Right ventricle myocardium inferior (tissue), 1 donor: ENCODE measurements at regions of chr4 and their contacts with region 1.

Region 1: GRCh38 chr4:152850377-152850776 is 70.6 kb downstream of the ARFIP1 start:
- DNase-seq: no peak
- ATAC-seq: peak; percentile 62

Region 2: DNA sequence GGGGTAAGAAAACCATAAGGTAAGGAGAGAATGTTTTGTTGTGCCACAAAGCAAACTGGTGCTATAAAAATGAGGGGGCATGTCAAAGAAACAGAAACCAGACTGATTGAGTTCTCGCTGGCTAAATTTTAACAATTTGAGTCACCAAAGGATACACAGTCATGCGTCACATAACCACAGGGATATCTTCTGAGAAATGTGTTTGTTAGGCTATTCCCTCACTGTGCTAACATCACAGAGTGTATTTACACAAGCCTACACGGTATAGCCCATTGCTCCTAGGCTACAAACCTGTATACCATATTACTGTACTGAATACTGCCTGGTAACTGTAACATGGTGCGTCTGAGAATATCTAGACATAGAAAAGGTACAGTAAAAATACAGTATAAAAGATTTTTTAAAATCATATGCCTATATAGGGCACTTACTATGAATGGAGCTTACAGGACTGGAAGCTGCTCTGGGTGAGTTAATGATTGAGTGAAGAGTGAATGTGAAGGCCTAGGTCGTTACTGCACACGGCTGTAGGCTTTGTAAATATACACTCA is 364.6 kb before region 1 on chr4:
- intact Hi-C with region 1: no loop called
- DNase-seq: no peak
- ATAC-seq: no peak

Region 3: DNA sequence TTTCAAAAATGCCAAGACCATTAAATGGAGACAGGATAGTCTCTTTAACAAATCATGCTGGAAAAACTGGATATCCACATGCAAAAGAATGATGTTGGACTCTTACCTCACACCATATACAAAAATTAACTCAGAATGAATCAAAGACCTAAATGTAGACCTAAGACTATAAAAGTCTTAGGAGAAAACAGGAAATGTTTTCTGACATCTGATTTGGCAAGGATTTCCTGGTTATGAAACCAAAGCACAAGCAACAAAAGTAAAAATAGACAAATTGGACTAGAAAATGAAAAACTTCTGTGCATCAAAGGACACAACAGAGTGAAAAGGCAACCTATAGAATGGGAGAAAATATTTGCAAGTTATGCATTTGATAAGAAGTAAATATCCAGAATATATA is 33.0 kb before region 1 on chr4:
- intact Hi-C with region 1: no loop called
- DNase-seq: no peak
- ATAC-seq: no peak

Region 4: GRCh38 chr4:152956650-152957436 is 106.5 kb after region 1 on chr4:
- intact Hi-C with region 1: loop called (anchors 5 kb)
- DNase-seq: no peak
- ATAC-seq: no peak

Region 5: DNA sequence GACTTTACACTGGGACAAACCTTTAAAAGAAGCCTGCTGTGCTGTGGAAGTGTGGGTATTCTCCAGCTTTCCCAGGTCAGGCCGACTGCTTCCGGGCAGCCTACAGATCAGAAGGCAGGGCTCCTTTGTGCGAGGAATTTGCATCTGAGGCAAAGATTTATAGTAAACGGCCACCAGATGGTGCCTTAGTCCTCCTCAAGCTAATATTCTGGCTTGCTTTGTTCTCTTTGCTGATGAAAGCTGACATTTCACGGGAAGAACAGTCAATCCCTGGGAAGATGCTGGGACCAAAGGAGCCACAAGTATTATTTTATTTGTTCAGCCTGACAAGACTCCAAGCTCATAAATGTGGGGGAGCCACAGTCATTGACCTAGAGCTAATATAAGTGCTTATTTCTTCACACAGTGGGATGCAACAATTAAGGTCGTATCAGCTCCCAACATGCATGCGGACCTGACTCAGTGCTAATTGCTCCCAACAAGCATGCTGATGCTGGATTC is 233.1 kb after region 1 on chr4:
- intact Hi-C with region 1: loop called (anchors 1 kb)
- DNase-seq: no peak
- ATAC-seq: peak; percentile 68

Region 6: DNA sequence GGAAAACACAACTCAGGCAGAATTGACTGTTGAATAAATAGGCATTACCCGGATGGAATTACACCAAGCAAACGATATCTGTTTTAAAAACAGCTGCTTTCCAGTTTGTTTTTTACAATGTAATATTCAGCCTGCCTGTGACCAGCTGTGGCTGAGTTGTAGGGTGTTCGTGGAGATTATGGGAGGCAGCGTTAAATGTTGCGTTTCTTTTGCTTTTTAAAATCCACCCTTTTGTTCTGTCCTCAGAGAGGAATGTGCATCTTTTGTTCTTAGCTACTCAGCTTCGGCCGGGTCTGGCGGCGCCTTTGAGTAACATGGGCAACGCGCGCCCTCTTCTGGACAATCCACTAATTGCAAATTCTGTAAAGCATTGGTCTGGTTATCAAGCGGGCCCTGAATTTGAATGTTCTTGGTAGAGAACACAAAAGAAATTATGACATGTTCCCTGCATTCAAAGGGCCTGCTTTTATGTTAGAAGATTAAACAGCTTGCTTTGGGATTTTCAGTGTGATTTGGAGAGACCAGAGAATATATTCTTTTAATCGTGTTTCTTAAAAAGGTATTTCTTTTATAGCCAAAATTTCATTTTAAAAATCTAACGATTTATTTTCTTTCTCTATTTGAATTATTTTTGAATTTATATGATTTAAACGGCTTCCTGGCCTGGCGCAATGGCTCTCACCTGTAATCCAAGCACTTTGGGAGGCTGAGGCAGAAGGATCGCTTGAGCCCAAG is 277.6 kb after region 1 on chr4:
- intact Hi-C with region 1: loop called (anchors 5 kb)
- DNase-seq: peak; percentile 92
- ATAC-seq: peak; percentile 80